GM12878 (cell line): ENCODE measurements at regions of chr12 and their contacts with region 1.

Region 1: DNA sequence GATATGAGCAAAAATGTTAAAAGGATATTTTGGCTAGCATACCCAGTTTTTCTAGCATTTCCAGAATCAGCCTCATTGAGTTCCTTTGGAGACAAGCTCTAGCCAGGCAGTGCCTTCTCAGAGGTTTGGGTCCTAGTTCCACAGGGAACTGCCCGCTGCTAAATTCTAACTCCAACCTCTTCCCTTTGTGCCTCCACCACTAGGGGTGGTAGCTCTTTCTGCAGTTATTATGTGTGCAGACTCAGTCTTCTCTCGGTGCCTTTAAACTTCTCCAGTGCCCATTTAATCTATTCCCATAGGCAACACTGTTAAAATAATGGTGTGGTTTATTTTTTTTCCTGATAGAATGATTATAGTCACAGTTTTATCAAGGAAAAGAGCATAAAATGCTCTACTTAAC is 21.5 kb upstream of the SLC25A3 start:
- DNase-seq: no peak
- ATAC-seq: peak; percentile 53; the same call in 2 of the 3 replicates
- H3K4me3 ChIP-seq: no peak overlapping the region
- H3K27ac ChIP-seq: no peak overlapping the region
- H3K4me1 ChIP-seq: no peaks in the 10 kb centered on the region
- H3K27me3 ChIP-seq: no peaks in the 10 kb centered on the region
- CTCF ChIP-seq: peak; percentile 4 to 34 (median 31); a peak in 2 of 6 replicates
- EP300 ChIP-seq: no peak
- POLR2A ChIP-seq: no peak
- RAD21 ChIP-seq: no peak

Region 2: GRCh38 chr12:98483621-98484503 is 88.1 kb before region 1 on chr12:
- CTCF ChIA-PET with region 1: no interaction called
- POLR2A ChIA-PET with region 1: no interaction called
- RAD21 ChIA-PET with region 1: no interaction called
- SMC1A ChIA-PET with region 1: no interaction called
- in situ Hi-C with region 1: no loop called
- intact Hi-C with region 1: no loop called
- DNase-seq: no peak
- ATAC-seq: no peak
- H3K4me3 ChIP-seq: no peak overlapping the region
- H3K27ac ChIP-seq: no peak overlapping the region
- H3K4me1 ChIP-seq: no peaks in the 10 kb centered on the region
- H3K27me3 ChIP-seq: no peaks in the 10 kb centered on the region; a peak in 1 of 4 replicates
- CTCF ChIP-seq: no peak
- EP300 ChIP-seq: no peak
- POLR2A ChIP-seq: no peak
- RAD21 ChIP-seq: no peak

Region 3: GRCh38 chr12:98550803-98551202 is 21.2 kb before region 1 on chr12:
- CTCF ChIA-PET with region 1: interaction called, 29 read pairs
- POLR2A ChIA-PET with region 1: no interaction called
- RAD21 ChIA-PET with region 1: no interaction called
- SMC1A ChIA-PET with region 1: no interaction called
- in situ Hi-C with region 1: no loop called
- intact Hi-C with region 1: no loop called
- DNase-seq: no peak
- ATAC-seq: no peak
- H3K4me3 ChIP-seq: no peak overlapping the region
- H3K27ac ChIP-seq: no peak overlapping the region
- H3K4me1 ChIP-seq: no peaks in the 10 kb centered on the region
- H3K27me3 ChIP-seq: no peaks in the 10 kb centered on the region
- CTCF ChIP-seq: no peak
- EP300 ChIP-seq: no peak
- POLR2A ChIP-seq: no peak
- RAD21 ChIP-seq: no peak

Region 4: GRCh38 chr12:98587084-98587483 is 15.1 kb after region 1 on chr12:
- CTCF ChIA-PET with region 1: interaction called, 19 read pairs
- POLR2A ChIA-PET with region 1: no interaction called
- RAD21 ChIA-PET with region 1: no interaction called
- SMC1A ChIA-PET with region 1: interaction called, 6 read pairs
- in situ Hi-C with region 1: no loop called
- intact Hi-C with region 1: no loop called
- DNase-seq: no peak
- ATAC-seq: no peak
- H3K4me3 ChIP-seq: no peak overlapping the region
- H3K27ac ChIP-seq: no peak overlapping the region
- H3K4me1 ChIP-seq: no peaks in the 10 kb centered on the region
- H3K27me3 ChIP-seq: no peaks in the 10 kb centered on the region
- CTCF ChIP-seq: no peak
- EP300 ChIP-seq: no peak
- POLR2A ChIP-seq: no peak
- RAD21 ChIP-seq: no peak

Region 5: GRCh38 chr12:98644711-98645402 is 72.8 kb after region 1 on chr12 and contains the starts of genes APAF1 and IKBIP:
- CTCF ChIA-PET with region 1: interaction called, 134 read pairs
- POLR2A ChIA-PET with region 1: interaction called, 3 read pairs
- RAD21 ChIA-PET with region 1: interaction called, 66 read pairs
- SMC1A ChIA-PET with region 1: interaction called, 107 read pairs
- in situ Hi-C with region 1: no loop called
- intact Hi-C with region 1: no loop called
- DNase-seq: peak; percentile 76
- ATAC-seq: peak; percentile 87
- H3K4me3 ChIP-seq: peak within 1 kb of the TSS; percentile 98
- H3K27ac ChIP-seq: peak within 1 kb of the TSS; percentile 94
- H3K4me1 ChIP-seq: no peaks in the 10 kb centered on the region
- H3K27me3 ChIP-seq: no peaks in the 10 kb centered on the region
- CTCF ChIP-seq: no peak
- EP300 ChIP-seq: 0 out of 4 replicates have a peak, but pooled peaks of 1 of the 2 experiments have one; percentile 5
- POLR2A ChIP-seq: peak; percentile 85
- RAD21 ChIP-seq: no peak
- polyA plus RNA-seq, gene APAF1: 4.2 to 5.0 TPM
- polyA plus RNA-seq, gene IKBIP: 5.4 to 12.2 TPM